ENCODE measurements at regions of chr19 and their contacts with region 1.

Region 1: GRCh38 chr19:3054972-3055740 is 7.1 kb downstream of the TLE5 start:
- DNase-seq: no peak
- ATAC-seq: no peak
- H3K4me3 Mint-ChIP-seq: peak overlapping the region in 8 of 10 donors; percentile 3 to 77 (median 56)
- H3K27ac Mint-ChIP-seq: peak overlapping the region; percentile 40 to 93 (median 80)
- H3K4me1 Mint-ChIP-seq: peaks cover 25 to 60% (median 59%) of the 10 kb centered on the region in 4 donors
- H3K27me3 Mint-ChIP-seq: no peaks in the 10 kb centered on the region

Region 2: DNA sequence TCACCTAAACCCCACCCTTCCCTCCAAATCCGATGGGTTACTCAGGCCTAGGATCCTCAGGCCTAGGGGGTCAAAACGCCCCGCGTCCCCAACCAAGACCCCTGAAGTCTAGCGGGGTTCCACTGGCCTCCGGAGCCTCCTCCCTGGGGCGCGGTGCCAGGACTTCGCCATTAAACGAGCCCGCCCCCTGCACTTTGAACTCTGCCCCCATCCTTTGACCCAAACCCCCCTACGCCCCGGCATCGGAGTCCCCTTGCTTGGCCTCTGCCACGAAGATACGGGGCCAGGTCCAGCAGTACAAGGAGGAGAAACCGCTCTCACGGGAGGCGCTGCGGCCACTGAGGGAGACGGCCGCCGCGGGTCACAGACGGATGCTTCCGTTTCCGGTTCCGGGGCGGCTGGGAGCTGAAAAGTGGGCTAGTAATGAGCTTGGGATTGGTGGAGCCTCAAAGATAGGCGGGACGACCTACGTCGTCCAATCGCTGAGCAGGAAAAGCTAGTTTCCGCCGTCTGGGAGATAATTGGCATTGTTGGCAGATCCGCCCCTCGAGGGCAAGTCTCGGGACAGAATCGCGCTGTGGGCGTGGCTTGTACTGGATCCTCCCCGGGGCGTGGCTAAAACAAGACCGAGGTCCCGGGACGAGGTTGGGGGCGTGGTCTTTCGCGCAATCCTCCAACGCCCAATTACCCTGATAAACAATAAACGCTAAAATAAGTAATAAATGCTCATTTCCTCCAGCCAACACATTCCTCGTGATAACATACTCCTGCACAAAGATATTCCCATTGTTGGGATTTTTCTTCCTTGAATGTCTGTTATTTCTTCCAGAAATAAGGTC is 104.7 kb before region 1 on chr19:
- POLR2A ChIA-PET with region 1: interaction called, 30 read pairs
- DNase-seq: peak; percentile 99 to 100 (median 100)
- ATAC-seq: peak; percentile 95 to 96
- H3K4me3 Mint-ChIP-seq: peak overlapping the region; percentile 91 to 98 (median 96)
- H3K27ac Mint-ChIP-seq: peak overlapping the region; percentile 95 to 99 (median 98)
- H3K4me1 Mint-ChIP-seq: peaks cover 9 to 30% (median 28%) of the 10 kb centered on the region in 4 donors
- H3K27me3 Mint-ChIP-seq: no peaks in the 10 kb centered on the region

Region 3: DNA sequence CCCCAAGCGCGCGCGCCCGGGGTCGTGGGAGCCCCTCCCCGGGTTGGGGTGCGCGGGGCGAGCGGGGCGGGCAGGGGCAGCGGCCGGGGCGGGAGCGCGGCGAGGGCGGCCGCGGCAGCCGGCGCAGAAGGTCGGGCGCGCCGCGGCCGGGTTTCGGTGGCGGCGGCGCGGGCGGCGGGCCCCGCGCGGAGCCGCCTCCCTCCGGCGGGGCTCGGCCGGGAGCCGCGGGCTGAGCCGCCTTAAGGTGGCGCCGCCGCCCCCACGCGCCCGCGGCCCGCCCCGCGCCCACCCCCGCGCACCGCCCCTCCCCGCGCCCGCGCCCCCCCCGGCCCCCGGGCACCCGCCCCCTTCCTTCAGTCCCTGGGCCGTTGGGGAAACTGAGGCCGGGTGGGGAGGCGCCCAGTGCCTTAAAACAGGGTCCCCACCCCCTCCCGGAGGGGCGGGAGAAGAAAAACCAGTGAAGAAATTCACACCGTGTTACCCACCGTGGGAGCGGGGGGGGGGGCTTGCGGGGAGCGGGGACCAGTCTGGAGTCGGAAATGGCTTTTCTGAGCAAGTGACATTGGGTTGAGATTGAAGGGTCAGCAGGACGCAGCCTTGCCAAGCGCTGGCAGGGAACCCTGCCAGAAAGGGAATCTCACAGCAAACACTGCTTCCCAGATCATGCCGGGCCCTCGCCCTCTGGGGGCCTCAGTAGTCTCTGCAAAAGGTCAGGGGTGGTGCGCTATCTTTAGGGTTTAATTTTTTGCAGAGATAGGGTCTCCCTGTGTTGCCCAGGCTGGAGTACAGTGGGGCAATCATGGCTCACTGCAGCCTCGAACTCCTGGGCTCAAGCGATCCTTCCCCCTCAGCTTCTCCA is 25.9 kb before region 1 on chr19 and contains the start of gene TLE2:
- POLR2A ChIA-PET with region 1: interaction called, 519 read pairs
- DNase-seq: peak in 1 of 10 donors; percentile 41
- ATAC-seq: peak; percentile 62 to 78
- H3K4me3 Mint-ChIP-seq: peak within 1 kb of the TSS; percentile 70 to 91 (median 82)
- H3K27ac Mint-ChIP-seq: peak within 1 kb of the TSS in 9 of 10 donors; percentile 36 to 81 (median 62)
- H3K4me1 Mint-ChIP-seq: peaks cover 27 to 38% (median 31%) of the 10 kb centered on the region in 4 donors
- H3K27me3 Mint-ChIP-seq: peaks cover 0 to 8% (median 0%) of the 10 kb centered on the region in 5 donors
- polyA plus RNA-seq, gene TLE2: 7.0 to 12.4 (median 10.8) TPM

Region 4: GRCh38 chr19:3082331-3082730 is 27.2 kb after region 1 on chr19:
- POLR2A ChIA-PET with region 1: no interaction called
- DNase-seq: no peak
- ATAC-seq: no peak
- H3K4me3 Mint-ChIP-seq: no peak overlapping the region
- H3K27ac Mint-ChIP-seq: peak overlapping the region in 1 of 10 donors; percentile 86
- H3K4me1 Mint-ChIP-seq: peaks cover 0 to 1% (median 0%) of the 10 kb centered on the region in 4 donors
- H3K27me3 Mint-ChIP-seq: no peaks in the 10 kb centered on the region

Measured in naive thymus-derived CD8-positive, alpha-beta T cell (primary cell).